ENCODE measurements at regions of chr12 and their contacts with region 1.

Region 1: GRCh38 chr12:32084017-32084688 is 22.5 kb upstream of the BICD1 start:
- DNase-seq: no peak
- H3K4me3 ChIP-seq: no peak overlapping the region
- H3K27ac ChIP-seq: no peak overlapping the region
- H3K4me1 ChIP-seq: no peaks in the 10 kb centered on the region
- CTCF ChIP-seq: no peak

Region 2: GRCh38 chr12:32069071-32069470 is 15.1 kb before region 1 on chr12:
- CTCF ChIA-PET with region 1: no interaction called
- POLR2A ChIA-PET with region 1: interaction called, 11 read pairs
- intact Hi-C with region 1: no loop called
- DNase-seq: no peak
- H3K4me3 ChIP-seq: no peak overlapping the region
- H3K27ac ChIP-seq: no peak overlapping the region
- H3K4me1 ChIP-seq: no peaks in the 10 kb centered on the region
- CTCF ChIP-seq: no peak

Region 3: GRCh38 chr12:32146074-32146873 is 62.1 kb after region 1 on chr12:
- CTCF ChIA-PET with region 1: no interaction called
- POLR2A ChIA-PET with region 1: no interaction called
- intact Hi-C with region 1: no loop called
- DNase-seq: no peak
- H3K4me3 ChIP-seq: no peak overlapping the region
- H3K27ac ChIP-seq: peak overlapping the region; percentile 12
- H3K4me1 ChIP-seq: peaks cover 47% of the 10 kb centered on the region
- CTCF ChIP-seq: no peak